ENCODE measurements at regions of chr18 and their contacts with region 1.

Region 1: DNA sequence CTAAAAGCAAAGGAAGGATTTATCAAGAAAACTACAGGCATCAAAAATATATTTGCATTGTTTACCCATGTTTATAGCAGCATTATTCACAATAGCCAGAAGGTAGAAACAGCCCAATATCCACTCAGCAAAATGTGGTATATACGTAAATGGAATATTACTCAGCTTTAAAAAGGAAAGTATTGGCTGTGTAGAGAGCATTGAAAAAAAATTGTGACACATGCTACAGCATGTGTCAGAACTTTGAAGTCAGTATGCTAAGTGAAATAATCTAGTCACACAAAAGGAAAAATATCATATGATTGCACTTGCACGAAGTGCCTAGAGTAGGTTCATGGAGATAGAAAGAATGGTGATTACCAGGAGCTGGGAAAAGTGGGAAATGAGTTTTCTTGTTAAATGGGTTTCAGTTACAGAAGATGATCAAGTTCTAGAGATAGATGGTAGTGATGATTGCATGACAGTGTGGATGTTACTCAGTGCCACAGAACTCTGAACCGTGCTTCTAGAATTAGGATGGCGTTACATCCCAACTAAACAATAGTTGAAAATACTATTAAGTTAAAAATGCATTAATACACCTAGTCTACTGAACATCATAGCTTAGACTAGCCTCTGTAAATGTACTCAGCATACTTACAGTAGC is 20.1 kb downstream of the ANKRD12 start:
- DNase-seq: no peak

Region 2: GRCh38 chr18:7711495-7711894 is 1445.2 kb before region 1 on chr18:
- intact Hi-C with region 1: no loop called
- DNase-seq: no peak

Region 3: GRCh38 chr18:8389391-8390340 is 767.1 kb before region 1 on chr18:
- intact Hi-C with region 1: loop called in 1 of 2 experiments (anchors 5 kb)
- DNase-seq: peak; percentile 89